H1 (cell line): ENCODE measurements at regions of chr15 and their contacts with region 1.

Region 1: DNA sequence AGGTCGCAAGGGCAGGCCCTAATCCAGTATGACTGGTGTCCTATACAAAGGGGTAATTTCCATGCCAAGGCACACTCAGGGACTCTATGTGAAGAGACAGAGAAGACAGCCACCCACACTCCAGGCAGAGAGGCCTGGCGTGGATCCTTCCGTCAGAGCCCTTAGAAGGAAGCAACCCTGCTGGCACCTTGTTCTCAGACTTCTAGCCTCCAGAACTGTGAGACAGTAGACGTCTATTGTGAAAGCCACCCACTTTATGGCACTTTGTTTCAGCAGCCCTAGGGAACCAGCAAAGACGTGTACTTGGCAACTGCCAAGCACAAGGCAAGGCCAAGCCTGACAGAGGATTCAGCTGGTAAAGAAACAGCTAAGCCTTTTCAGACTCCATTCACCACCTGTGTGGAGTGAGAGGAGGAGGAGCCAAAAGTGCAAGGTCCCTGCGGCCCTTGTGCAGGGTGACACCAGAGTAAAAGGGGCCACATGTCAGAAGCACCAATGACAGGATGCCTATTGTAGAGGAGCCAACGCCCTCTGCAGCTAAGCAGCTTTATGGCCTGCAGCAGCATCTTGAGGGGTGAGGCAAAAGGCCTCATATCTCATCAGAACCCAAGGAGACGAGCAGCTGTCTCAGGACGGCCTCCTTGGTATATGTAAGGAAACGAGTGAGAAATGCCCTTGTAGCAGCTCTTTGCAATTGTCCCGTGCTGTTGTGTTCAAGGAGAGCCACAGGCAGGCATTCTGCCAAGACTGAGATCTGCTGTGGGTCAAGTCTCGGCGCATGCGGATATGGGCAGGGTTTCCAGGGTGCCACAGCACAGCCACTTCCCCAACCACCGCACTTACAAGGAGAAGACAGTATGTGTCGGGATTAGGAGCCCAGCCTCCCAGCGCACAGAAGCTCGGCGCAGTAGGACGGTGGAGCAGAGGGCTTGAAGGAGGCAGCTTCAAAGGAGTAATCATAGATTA is 121.5 kb upstream of the LIPC start:
- DNase-seq: no peak
- H3K4me3 ChIP-seq: no peak overlapping the region
- H3K27ac ChIP-seq: no peak overlapping the region
- H3K4me1 ChIP-seq: peaks cover 2 to 11% (median 5%) of the 10 kb centered on the region in 4 experiments; a peak in 5 of 7 replicates
- H3K27me3 ChIP-seq: no peaks in the 10 kb centered on the region
- CTCF ChIP-seq: no peak
- EP300 ChIP-seq: no peak
- POLR2A ChIP-seq: no peak
- RAD21 ChIP-seq: no peak

Region 2: DNA sequence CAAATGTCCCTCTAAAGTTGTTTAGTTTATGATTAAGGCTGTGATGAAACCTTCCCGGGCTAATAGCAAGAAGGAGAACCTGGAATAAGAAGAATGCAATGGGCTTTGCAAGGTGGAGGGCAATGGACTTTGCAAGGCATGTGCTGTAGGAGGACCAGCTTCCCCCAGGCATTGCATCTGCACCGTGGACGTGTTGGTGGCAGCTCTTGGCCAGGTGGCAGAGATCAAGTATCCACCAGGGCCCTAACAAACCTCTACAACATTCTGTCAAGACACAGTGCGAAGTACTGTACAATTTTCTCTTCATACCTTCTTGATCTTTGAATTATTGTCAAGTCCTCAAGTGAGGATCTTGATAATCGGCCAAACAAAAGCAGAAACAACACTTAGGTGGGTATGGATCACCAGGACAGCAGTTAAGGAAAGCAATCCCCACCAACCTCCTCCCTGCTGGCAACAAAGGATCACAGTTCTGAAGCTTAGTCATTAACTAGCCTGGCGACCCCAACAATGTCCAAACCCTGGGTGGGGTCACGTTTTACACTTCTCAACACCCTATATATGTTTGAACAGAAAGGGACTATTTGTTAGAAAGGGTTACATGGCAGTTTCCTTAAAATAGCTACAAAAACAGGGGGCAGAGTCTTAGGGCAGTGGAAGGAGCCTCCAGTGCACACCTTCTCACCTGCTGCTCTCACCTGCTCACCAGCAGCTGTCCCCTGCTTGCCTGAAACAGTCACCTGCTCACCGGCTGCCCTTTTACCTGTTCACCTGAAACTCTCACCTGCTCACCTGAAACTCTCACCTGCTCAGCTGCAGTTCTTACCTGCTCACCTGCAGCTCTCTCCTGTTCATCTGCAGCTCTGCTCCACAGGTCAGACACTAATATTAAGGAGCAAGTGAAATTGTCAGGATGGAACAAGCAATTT is 16.4 kb before region 1 on chr15:
- CTCF ChIA-PET with region 1: interaction called, 18 read pairs
- POLR2A ChIA-PET with region 1: interaction called, 5 read pairs
- DNase-seq: no peak
- H3K4me3 ChIP-seq: no peak overlapping the region
- H3K27ac ChIP-seq: no peak overlapping the region
- H3K4me1 ChIP-seq: peaks cover 0 to 9% (median 6%) of the 10 kb centered on the region in 4 experiments; a peak in 3 of 7 replicates
- H3K27me3 ChIP-seq: no peaks in the 10 kb centered on the region
- CTCF ChIP-seq: no peak
- EP300 ChIP-seq: no peak
- POLR2A ChIP-seq: no peak
- RAD21 ChIP-seq: no peak

Region 3: GRCh38 chr15:58298879-58299850 is 11.1 kb before region 1 on chr15:
- CTCF ChIA-PET with region 1: interaction called, 18 read pairs
- POLR2A ChIA-PET with region 1: interaction called, 5 read pairs
- DNase-seq: no peak
- H3K4me3 ChIP-seq: no peak overlapping the region
- H3K27ac ChIP-seq: no peak overlapping the region
- H3K4me1 ChIP-seq: peaks cover 0 to 9% (median 5%) of the 10 kb centered on the region in 4 experiments; a peak in 3 of 7 replicates
- H3K27me3 ChIP-seq: no peaks in the 10 kb centered on the region
- CTCF ChIP-seq: no peak
- EP300 ChIP-seq: no peak
- POLR2A ChIP-seq: no peak
- RAD21 ChIP-seq: no peak

Region 4: GRCh38 chr15:58331903-58332675 is 21.8 kb after region 1 on chr15:
- CTCF ChIA-PET with region 1: interaction called, 14 read pairs
- POLR2A ChIA-PET with region 1: interaction called, 3 read pairs
- DNase-seq: peak in 1 of 2 experiments; percentile 46
- H3K4me3 ChIP-seq: no peak overlapping the region
- H3K27ac ChIP-seq: peak overlapping the region; percentile 35
- H3K4me1 ChIP-seq: peaks cover 10 to 26% (median 16%) of the 10 kb centered on the region in 4 experiments; a peak in 6 of 7 replicates
- H3K27me3 ChIP-seq: no peaks in the 10 kb centered on the region
- CTCF ChIP-seq: no peak
- EP300 ChIP-seq: no peak
- POLR2A ChIP-seq: peak in 1 of 2 experiments; percentile 55; a peak in 2 of 3 replicates
- RAD21 ChIP-seq: no peak

Region 5: GRCh38 chr15:58546635-58547627 is 236.7 kb after region 1 on chr15:
- CTCF ChIA-PET with region 1: no interaction called
- POLR2A ChIA-PET with region 1: no interaction called
- DNase-seq: no peak
- H3K4me3 ChIP-seq: no peak overlapping the region
- H3K27ac ChIP-seq: no peak overlapping the region
- H3K4me1 ChIP-seq: peaks cover 0 to 1% (median under 1%) of the 10 kb centered on the region in 4 experiments; a peak in 3 of 7 replicates
- H3K27me3 ChIP-seq: no peaks in the 10 kb centered on the region
- CTCF ChIP-seq: no peak
- EP300 ChIP-seq: no peak
- POLR2A ChIP-seq: no peak
- RAD21 ChIP-seq: no peak